ENCODE measurements at regions of chr6 and their contacts with region 1.

Region 1: DNA sequence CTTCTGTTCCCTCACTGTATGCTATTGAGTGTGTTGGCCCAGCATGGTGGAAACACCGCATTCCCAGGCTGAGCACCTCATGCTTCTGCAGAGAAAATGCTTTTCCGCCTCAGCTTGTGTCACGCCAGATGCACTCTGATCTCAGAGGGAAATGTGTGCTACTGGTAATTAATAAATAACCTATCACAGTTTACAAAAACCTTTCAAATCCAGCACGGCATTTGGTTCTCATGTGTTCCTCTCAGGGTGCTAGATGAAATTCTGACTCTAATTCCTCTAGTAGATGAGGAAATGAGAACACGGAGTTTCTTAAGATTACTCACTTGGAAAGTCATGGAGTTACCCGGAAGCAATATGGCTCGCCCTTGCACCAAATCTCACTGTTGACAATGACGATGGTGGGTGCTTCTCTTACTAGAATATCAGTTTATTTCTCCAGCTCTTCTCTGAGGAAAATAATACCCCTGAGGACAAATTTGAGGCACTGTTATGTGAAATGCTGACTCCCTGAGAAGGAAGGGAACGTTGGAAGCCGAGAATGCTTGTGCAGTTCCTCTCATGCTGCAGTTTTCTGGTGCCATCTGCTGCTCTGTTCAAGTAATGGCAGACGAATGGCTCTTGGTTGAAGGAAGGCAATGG is 116.6 kb downstream of the RNF144B start:
- DNase-seq: peak; percentile 50
- H3K4me3 ChIP-seq: peak overlapping the region in 3 of 4 donors; percentile 11 to 37 (median 24)
- H3K27ac ChIP-seq: peak overlapping the region; percentile 15 to 33 (median 28)
- H3K4me1 ChIP-seq: peaks cover 0 to 3% (median 1%) of the 10 kb centered on the region in 4 donors
- H3K27me3 ChIP-seq: no peaks in the 10 kb centered on the region
- CTCF ChIP-seq: peak; percentile 76 to 89 (median 85)
- EP300 ChIP-seq: no peak
- POLR2A ChIP-seq: no peak

Region 2: DNA sequence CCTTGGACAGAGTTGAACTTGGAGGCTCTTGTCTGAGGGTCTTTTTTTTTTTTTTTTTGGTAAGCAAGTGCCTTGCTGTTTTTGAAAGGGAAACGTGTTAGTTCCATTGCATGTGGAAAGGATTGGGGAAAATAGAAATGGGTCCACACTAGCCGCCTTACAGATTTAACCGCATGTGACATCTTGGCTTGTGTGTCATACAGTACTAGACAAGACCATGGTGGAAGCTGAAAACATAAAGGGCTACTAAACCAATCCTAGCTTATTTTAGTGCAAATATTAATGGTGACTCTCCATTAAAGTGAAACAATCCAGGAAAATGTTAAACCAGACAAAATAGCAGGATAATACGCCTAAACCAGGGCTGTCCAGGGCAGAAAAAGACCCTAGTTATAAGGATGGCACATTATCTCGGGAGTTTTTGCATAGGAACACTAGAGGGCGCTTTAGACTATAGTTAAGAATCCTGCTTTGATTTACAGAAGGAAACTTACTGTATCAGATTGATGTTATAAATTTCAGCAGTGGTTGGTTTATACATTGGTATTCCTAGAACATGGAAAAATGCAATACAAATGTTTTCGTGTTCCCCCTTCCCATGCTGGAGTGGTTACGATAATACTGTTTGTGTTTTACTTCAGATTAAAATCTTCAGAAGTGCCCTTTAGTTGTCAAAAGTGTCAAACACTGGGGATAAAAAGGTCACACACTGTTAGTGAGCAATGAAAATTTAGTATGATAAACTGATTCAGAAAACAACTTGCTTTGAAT is 179.6 kb before region 1 on chr6:
- in situ Hi-C with region 1: loop called in 3 of 4 experiments (anchors 5 to 10 kb)
- intact Hi-C with region 1: loop called (anchors 1 kb)
- DNase-seq: no peak
- H3K4me3 ChIP-seq: no peak overlapping the region
- H3K27ac ChIP-seq: no peak overlapping the region
- H3K4me1 ChIP-seq: peaks cover 0 to 9% (median 0%) of the 10 kb centered on the region in 4 donors
- H3K27me3 ChIP-seq: no peaks in the 10 kb centered on the region
- CTCF ChIP-seq: peak; percentile 71 to 77 (median 73)
- EP300 ChIP-seq: no peak
- POLR2A ChIP-seq: no peak

Region 3: DNA sequence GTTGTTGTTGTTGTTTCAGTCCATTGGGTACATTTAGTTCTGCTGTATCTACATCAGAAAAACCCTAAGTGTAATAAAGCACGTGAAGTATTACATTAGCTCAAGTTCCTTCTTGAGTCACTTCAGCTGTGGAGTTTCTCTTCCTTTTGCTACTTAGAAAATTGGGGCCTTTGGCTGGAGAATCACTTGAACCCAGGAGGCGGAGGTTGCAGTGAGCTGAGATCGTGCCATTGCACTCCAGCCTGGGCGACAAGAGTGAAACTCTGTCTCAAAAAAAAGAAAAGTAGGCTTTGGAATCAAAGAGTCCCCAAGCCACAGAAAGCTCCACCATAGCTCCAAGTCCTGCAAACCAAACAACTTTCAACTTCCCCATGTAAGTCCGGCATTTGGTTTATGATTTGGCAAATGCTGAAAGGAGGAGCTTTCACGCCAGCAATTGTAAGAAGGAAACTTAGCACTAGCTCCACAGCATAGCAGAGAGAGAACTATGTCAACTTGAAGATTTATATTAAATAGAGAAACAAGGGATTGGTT is 173.1 kb before region 1 on chr6:
- in situ Hi-C with region 1: loop called in 3 of 4 experiments (anchors 5 to 10 kb)
- intact Hi-C with region 1: no loop called
- DNase-seq: no peak
- H3K4me3 ChIP-seq: no peak overlapping the region
- H3K27ac ChIP-seq: peak overlapping the region; percentile 3 to 57 (median 42)
- H3K4me1 ChIP-seq: peaks cover 0 to 12% (median 0%) of the 10 kb centered on the region in 4 donors
- H3K27me3 ChIP-seq: no peaks in the 10 kb centered on the region
- CTCF ChIP-seq: no peak
- EP300 ChIP-seq: peak; percentile 57
- POLR2A ChIP-seq: peak; percentile 25

Region 4: GRCh38 chr6:19083809-19084208 is 580.1 kb after region 1 on chr6:
- in situ Hi-C with region 1: no loop called
- intact Hi-C with region 1: no loop called
- DNase-seq: no peak
- H3K4me3 ChIP-seq: no peak overlapping the region
- H3K27ac ChIP-seq: no peak overlapping the region
- H3K4me1 ChIP-seq: no peaks in the 10 kb centered on the region
- H3K27me3 ChIP-seq: no peaks in the 10 kb centered on the region
- CTCF ChIP-seq: no peak
- EP300 ChIP-seq: no peak
- POLR2A ChIP-seq: no peak